Naive thymus-derived CD4-positive, alpha-beta T cell (primary cell): ENCODE measurements at regions of chr14 and their contacts with region 1.

Region 1: DNA sequence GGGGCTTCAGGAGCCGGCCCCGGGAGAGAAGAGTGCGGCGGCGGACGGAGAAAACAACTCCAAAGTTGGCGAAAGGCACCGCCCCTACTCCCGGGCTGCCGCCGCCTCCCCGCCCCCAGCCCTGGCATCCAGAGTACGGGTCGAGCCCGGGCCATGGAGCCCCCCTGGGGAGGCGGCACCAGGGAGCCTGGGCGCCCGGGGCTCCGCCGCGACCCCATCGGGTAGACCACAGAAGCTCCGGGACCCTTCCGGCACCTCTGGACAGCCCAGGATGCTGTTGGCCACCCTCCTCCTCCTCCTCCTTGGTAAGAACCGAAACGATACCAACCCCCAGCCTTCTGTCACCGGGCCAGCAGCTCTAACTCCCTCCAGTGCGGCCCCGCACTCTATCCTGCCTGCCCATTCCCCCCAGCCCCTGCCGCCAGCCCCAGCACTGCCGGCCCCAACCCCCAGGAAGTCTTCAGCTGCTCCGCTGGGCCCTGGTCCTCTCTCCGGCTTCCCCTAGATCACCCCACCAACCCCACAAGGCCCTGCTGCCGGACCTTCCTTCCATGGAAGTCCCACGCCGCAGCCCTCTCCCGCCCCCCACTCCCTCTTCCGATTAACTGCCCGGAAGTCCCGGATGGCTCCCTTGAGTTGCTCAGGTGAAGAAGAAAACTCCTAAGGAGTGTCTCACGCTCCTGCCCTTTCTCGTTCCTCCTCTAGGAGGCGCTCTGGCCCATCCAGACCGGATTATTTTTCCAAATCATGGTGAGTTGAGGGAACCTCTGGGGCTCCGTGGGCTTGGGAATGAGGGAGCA is 693 bp downstream of the LRP10 start:
- DNase-seq: peak; percentile 55 to 76 (median 69)
- ATAC-seq: peak; percentile 57
- H3K4me3 ChIP-seq: peak overlapping the region; percentile 72
- H3K4me3 Mint-ChIP-seq: peak overlapping the region; percentile 87 to 98 (median 95)
- H3K27ac ChIP-seq: peak overlapping the region; percentile 86
- H3K27ac Mint-ChIP-seq: peak overlapping the region; percentile 83 to 98 (median 94)
- H3K4me1 ChIP-seq: peaks cover 20 to 33% of the 10 kb centered on the region in 2 donors
- H3K4me1 Mint-ChIP-seq: peaks cover 26 to 49% (median 29%) of the 10 kb centered on the region in 7 donors
- H3K27me3 ChIP-seq: no peaks in the 10 kb centered on the region
- H3K27me3 Mint-ChIP-seq: no peaks in the 10 kb centered on the region

Region 2: DNA sequence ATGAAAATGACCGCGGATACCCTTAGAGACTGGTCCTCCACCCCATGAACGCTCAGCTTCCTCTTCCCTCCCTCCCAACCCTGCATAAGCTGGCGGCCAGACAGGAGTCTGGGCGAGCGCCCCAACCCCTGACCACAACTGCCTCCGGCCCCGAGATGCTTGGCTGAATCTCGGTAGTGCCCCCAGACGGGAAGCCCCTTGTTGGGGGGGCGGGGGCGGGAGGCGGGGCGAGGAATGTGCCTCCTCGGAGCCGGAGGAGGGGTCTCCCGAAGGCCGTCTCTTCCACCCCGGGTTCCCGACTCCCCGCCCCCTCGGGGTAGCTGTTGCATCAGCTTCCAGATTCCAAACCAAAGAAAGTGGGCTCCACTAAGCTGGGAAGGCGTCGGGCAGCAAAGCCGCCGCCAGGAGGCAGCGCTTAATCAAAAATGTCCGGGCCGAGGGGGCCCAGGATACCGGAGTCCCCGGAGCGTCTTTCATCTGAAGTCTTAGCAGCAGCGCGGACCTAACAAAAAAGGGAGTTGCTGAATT is 49.6 kb before region 1 on chr14:
- CTCF ChIA-PET with region 1: interaction called, 5 read pairs
- POLR2A ChIA-PET with region 1: interaction called, 18 read pairs
- intact Hi-C with region 1: loop called in 1 of 2 experiments (anchors 1 kb)
- DNase-seq: peak; percentile 50 to 71 (median 65)
- ATAC-seq: peak; percentile 83
- H3K4me3 ChIP-seq: peak overlapping the region; percentile 38
- H3K4me3 Mint-ChIP-seq: peak overlapping the region; percentile 47 to 78 (median 66)
- H3K27ac ChIP-seq: no peak overlapping the region
- H3K27ac Mint-ChIP-seq: peak overlapping the region in 3 of 9 donors; percentile 11 to 36 (median 22)
- H3K4me1 ChIP-seq: peaks cover 0 to 17% of the 10 kb centered on the region in 2 donors
- H3K4me1 Mint-ChIP-seq: peaks cover 6 to 37% (median 24%) of the 10 kb centered on the region in 7 donors
- H3K27me3 ChIP-seq: no peaks in the 10 kb centered on the region
- H3K27me3 Mint-ChIP-seq: peaks cover 0 to 16% (median 4%) of the 10 kb centered on the region in 5 donors

Region 3: DNA sequence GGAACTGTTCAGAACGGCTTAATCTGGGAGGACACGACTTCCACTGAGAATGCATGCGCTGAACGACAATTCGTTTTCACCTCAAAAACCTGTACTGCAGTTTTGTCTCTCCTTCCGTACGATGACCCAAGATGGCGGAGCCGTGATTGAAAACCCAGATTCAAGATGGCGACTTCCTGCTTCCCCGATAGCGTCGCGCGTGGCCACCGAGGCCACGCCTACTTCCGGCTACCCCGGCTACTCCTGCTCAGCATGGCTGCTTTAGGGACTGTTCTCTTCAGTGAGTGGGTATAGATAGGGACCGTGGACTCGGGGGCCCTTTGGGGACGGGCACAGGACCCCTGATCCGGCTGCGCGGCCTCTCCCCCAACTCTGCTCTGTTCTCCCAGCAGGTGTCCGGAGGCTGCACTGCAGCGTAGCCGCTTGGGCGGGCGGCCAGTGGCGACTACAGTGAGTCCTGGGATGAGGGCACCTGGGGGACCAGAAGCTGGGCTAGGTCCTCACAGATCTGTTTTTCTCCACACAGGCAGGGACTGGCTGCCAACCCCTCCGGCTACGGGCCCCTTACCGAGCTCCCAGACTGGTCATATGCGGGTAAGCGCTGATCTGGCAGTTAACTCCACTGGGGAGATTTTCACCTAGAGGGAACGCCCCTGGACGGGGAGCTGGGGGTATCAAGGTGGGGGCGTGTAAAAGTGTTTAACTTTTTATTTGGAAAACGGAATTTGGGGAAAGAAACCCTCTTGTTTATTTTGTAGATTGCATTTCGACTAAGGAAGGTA is 42.4 kb before region 1 on chr14 and contains the start of gene MRPL52:
- CTCF ChIA-PET with region 1: interaction called, 3 read pairs
- POLR2A ChIA-PET with region 1: interaction called, 18 read pairs
- intact Hi-C with region 1: loop called (anchors 1 kb)
- DNase-seq: peak; percentile 71 to 90 (median 88)
- ATAC-seq: peak; percentile 97
- H3K4me3 ChIP-seq: peak within 1 kb of the TSS; percentile 99
- H3K4me3 Mint-ChIP-seq: peak within 1 kb of the TSS; percentile 74 to 94 (median 91)
- H3K27ac ChIP-seq: peak within 1 kb of the TSS; percentile 95
- H3K27ac Mint-ChIP-seq: peak within 1 kb of the TSS; percentile 91 to 99 (median 97)
- H3K4me1 ChIP-seq: peaks cover 11 to 21% of the 10 kb centered on the region in 2 donors
- H3K4me1 Mint-ChIP-seq: peaks cover 11 to 39% (median 32%) of the 10 kb centered on the region in 7 donors
- H3K27me3 ChIP-seq: no peaks in the 10 kb centered on the region
- H3K27me3 Mint-ChIP-seq: peaks cover 0 to 2% (median 0%) of the 10 kb centered on the region in 5 donors
- total RNA-seq, gene MRPL52: 32.9 to 118 (median 48.2) TPM

Region 4: DNA sequence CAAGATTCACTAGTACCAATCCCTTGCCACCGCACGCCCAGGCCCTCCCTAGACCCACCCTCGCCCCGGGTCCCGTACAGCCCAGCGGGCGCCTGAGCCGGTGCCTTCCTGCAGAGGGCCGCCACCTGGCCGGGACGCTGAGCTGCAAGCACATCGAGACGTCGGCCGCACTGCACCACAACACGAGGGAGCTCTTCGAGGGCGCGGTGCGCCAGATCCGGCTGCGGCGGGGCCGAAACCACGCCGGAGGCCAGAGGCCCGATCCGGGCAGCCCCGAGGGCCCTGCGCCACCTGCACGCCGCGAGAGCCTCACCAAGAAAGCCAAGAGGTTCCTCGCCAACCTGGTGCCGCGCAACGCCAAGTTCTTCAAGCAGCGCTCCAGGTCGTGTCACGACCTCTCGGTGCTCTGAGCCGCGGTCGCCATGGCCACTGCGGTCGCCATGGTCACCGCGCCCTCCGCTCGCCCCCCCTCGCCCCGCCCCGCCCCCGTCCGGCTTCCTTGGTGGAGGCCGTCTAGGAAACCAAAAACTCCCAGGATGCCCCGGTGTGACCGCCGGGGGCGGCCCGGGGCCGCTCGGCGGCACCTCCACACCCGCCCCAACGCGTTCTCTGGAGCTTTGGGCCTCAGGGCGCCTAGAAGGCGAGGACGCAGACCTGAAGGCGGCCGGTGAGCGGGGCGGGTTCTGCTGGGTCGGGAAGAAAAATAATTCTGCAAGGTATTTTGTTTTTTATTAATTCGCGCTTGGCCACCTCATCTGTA is 14.4 kb after region 1 on chr14:
- CTCF ChIA-PET with region 1: interaction called, 75 read pairs
- POLR2A ChIA-PET with region 1: interaction called, 145 read pairs
- intact Hi-C with region 1: loop called (anchors 1 kb)
- DNase-seq: peak; percentile 42 to 75 (median 69)
- ATAC-seq: peak; percentile 80
- H3K4me3 ChIP-seq: peak overlapping the region; percentile 77
- H3K4me3 Mint-ChIP-seq: peak overlapping the region; percentile 88 to 100 (median 92)
- H3K27ac ChIP-seq: peak overlapping the region; percentile 75
- H3K27ac Mint-ChIP-seq: peak overlapping the region; percentile 85 to 98 (median 96)
- H3K4me1 ChIP-seq: peaks cover 21 to 53% of the 10 kb centered on the region in 2 donors
- H3K4me1 Mint-ChIP-seq: peaks cover 39 to 80% (median 72%) of the 10 kb centered on the region in 7 donors
- H3K27me3 ChIP-seq: no peaks in the 10 kb centered on the region
- H3K27me3 Mint-ChIP-seq: peaks cover 0 to 21% (median 0%) of the 10 kb centered on the region in 5 donors

Region 5: GRCh38 chr14:22900081-22900799 is 28.0 kb after region 1 on chr14:
- CTCF ChIA-PET with region 1: interaction called, 26 read pairs
- POLR2A ChIA-PET with region 1: interaction called, 8 read pairs
- intact Hi-C with region 1: loop called (anchors 1 kb)
- DNase-seq: peak in 7 of 9 donors; percentile 41 to 72 (median 66)
- ATAC-seq: peak; percentile 94
- H3K4me3 ChIP-seq: no peak overlapping the region
- H3K4me3 Mint-ChIP-seq: no peak overlapping the region
- H3K27ac ChIP-seq: peak overlapping the region; percentile 15
- H3K27ac Mint-ChIP-seq: peak overlapping the region in 8 of 9 donors; percentile 0 to 58 (median 35)
- H3K4me1 ChIP-seq: peaks cover 0 to 4% of the 10 kb centered on the region in 2 donors
- H3K4me1 Mint-ChIP-seq: peaks cover 10 to 24% (median 15%) of the 10 kb centered on the region in 7 donors
- H3K27me3 ChIP-seq: no peaks in the 10 kb centered on the region
- H3K27me3 Mint-ChIP-seq: no peaks in the 10 kb centered on the region

Region 6: GRCh38 chr14:22929104-22929847 is 57.0 kb after region 1 on chr14 and contains the start of gene PRMT5:
- CTCF ChIA-PET with region 1: interaction called, 4 read pairs
- POLR2A ChIA-PET with region 1: interaction called, 13 read pairs
- intact Hi-C with region 1: loop called (anchors 1 kb)
- DNase-seq: peak; percentile 81 to 100 (median 99)
- ATAC-seq: peak; percentile 97
- H3K4me3 ChIP-seq: peak within 1 kb of the TSS; percentile 91
- H3K4me3 Mint-ChIP-seq: no peak within 1 kb of the TSS
- H3K27ac ChIP-seq: peak within 1 kb of the TSS; percentile 91
- H3K27ac Mint-ChIP-seq: no peak within 1 kb of the TSS
- H3K4me1 ChIP-seq: peaks cover 9 to 17% of the 10 kb centered on the region in 2 donors
- H3K4me1 Mint-ChIP-seq: peaks cover 5 to 36% (median 20%) of the 10 kb centered on the region in 7 donors
- H3K27me3 ChIP-seq: no peaks in the 10 kb centered on the region
- H3K27me3 Mint-ChIP-seq: no peaks in the 10 kb centered on the region
- total RNA-seq, gene PRMT5: 24.9 to 82.8 (median 34.2) TPM

Region 7: GRCh38 chr14:23034483-23035302 is 162.5 kb after region 1 on chr14 and contains the start of gene PSMB5:
- CTCF ChIA-PET with region 1: no interaction called
- POLR2A ChIA-PET with region 1: no interaction called
- intact Hi-C with region 1: loop called in 1 of 2 experiments (anchors 1 kb)
- DNase-seq: peak; percentile 63 to 94 (median 91)
- ATAC-seq: peak; percentile 95
- H3K4me3 ChIP-seq: peak within 1 kb of the TSS; percentile 79
- H3K4me3 Mint-ChIP-seq: peak within 1 kb of the TSS; percentile 87 to 96 (median 92)
- H3K27ac ChIP-seq: peak within 1 kb of the TSS; percentile 83
- H3K27ac Mint-ChIP-seq: peak within 1 kb of the TSS; percentile 93 to 99 (median 96)
- H3K4me1 ChIP-seq: peaks cover 9 to 17% of the 10 kb centered on the region in 2 donors
- H3K4me1 Mint-ChIP-seq: peaks cover 22 to 43% (median 29%) of the 10 kb centered on the region in 7 donors
- H3K27me3 ChIP-seq: no peaks in the 10 kb centered on the region
- H3K27me3 Mint-ChIP-seq: no peaks in the 10 kb centered on the region
- total RNA-seq, gene PSMB5: 19.2 to 69.1 (median 32.8) TPM

Region 8: GRCh38 chr14:23112359-23113178 is 240.3 kb after region 1 on chr14:
- CTCF ChIA-PET with region 1: no interaction called
- POLR2A ChIA-PET with region 1: no interaction called
- intact Hi-C with region 1: no loop called
- DNase-seq: no peak
- ATAC-seq: peak; percentile 80
- H3K4me3 ChIP-seq: no peak overlapping the region
- H3K4me3 Mint-ChIP-seq: no peak overlapping the region
- H3K27ac ChIP-seq: no peak overlapping the region
- H3K27ac Mint-ChIP-seq: no peak overlapping the region
- H3K4me1 ChIP-seq: peaks cover 0 to under 1% of the 10 kb centered on the region in 2 donors
- H3K4me1 Mint-ChIP-seq: peaks cover 3 to 31% (median 11%) of the 10 kb centered on the region in 7 donors
- H3K27me3 ChIP-seq: no peaks in the 10 kb centered on the region
- H3K27me3 Mint-ChIP-seq: peaks cover 0 to 9% (median 0%) of the 10 kb centered on the region in 5 donors